ENCODE measurements at regions of chr1 and their contacts with region 1.

Region 1: DNA sequence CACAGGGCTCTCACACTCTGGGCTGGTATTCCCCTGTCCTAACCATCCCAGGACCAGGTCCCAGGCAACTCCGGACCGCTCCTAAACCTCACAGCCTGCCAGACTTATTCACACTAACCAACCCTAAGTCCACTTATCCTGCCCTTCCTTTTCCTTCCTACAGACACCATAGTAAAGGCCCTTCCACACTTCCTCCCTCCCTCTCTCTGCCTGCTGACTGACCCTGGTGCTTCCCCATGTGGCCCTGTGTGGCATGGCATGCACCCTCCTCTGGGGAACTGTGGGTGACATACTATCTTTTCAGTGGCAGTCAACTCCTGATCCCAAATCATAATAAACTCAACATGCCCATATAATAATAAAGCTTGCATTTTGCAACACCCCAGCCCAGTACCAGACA is 155.1 kb upstream of the DNAH14 start:
- DNase-seq: peak; percentile 5
- H3K4me3 ChIP-seq: no peak overlapping the region
- H3K27ac ChIP-seq: no peak overlapping the region
- H3K4me1 ChIP-seq: peaks cover 5% of the 10 kb centered on the region
- H3K27me3 ChIP-seq: no peaks in the 10 kb centered on the region
- CTCF ChIP-seq: peak; percentile 51 to 57

Region 2: DNA sequence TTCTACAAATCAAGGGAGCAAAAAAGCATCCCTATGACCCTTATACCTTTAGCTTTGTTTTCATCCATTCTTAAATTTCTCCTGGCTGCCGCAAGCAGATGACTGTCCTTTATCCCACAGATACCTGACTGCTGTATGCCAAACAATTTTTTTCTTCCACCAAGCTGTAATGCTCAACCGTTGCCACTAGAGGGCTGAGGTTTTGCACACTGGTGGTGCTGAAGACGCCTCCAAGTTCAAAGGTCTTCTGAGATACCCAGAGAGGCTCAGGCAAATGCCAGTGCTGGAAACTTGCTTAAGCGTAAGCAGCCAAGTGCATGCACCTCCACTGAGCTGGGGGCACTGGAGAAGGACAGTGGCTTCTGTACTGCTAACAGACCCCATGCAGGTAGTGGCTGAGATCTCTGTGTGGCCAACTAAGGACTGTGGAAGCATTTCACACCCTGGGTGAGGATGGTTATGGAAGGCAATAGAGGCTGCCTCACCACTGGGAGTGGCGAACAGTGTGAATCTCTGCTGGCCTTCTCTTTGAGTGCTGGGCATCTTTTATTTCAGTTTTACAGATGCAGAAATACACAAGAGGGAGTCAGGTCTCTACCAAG is 129.7 kb before region 1 on chr1:
- CTCF ChIA-PET with region 1: no interaction called
- dilution Hi-C with region 1: no loop called
- in situ Hi-C with region 1: no loop called
- intact Hi-C with region 1: loop called (anchors 1 kb)
- DNase-seq: peak; percentile 48
- H3K4me3 ChIP-seq: no peak overlapping the region
- H3K27ac ChIP-seq: no peak overlapping the region
- H3K4me1 ChIP-seq: no peaks in the 10 kb centered on the region
- H3K27me3 ChIP-seq: no peaks in the 10 kb centered on the region
- CTCF ChIP-seq: peak; percentile 93 to 95